ENCODE measurements at regions of chr5 and their contacts with region 1.

Region 1: GRCh38 chr5:134411546-134412266 is at the start of gene CDKN2AIPNL:
- DNase-seq: peak; percentile 95
- ATAC-seq: peak; percentile 100
- H3K4me3 Mint-ChIP-seq: peak within 1 kb of the TSS; percentile 96
- H3K27ac Mint-ChIP-seq: peak within 1 kb of the TSS; percentile 92
- H3K4me1 Mint-ChIP-seq: peaks cover 35% of the 10 kb centered on the region
- H3K27me3 Mint-ChIP-seq: no peaks in the 10 kb centered on the region
- total RNA-seq, gene CDKN2AIPNL: 36.1 to 42.0 TPM

Region 2: DNA sequence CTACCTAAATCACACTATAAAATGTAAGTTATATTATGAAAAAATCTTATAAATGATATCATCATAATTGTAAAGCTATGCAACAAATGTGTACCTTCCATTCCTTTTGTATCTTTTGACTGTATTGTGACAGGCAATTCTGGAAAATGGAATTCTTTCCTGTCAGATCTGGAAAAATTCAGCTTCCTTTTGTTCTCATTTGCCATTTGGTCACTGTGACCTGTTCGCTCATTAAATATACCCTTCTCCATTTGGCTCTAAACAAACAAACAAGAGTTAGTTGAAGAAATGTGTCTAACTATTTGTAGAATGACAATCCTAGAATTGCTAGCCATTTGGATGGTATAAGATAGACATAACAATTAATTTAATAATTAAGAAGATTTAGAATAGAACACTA is 107.4 kb before region 1 on chr5:
- CTCF ChIA-PET with region 1: interaction called, 9 read pairs
- POLR2A ChIA-PET with region 1: no interaction called
- intact Hi-C with region 1: loop called in 1 of 2 experiments (anchors 10 kb)
- DNase-seq: no peak
- ATAC-seq: no peak
- H3K4me3 Mint-ChIP-seq: no peak overlapping the region
- H3K27ac Mint-ChIP-seq: no peak overlapping the region
- H3K4me1 Mint-ChIP-seq: no peaks in the 10 kb centered on the region
- H3K27me3 Mint-ChIP-seq: no peaks in the 10 kb centered on the region

Region 3: DNA sequence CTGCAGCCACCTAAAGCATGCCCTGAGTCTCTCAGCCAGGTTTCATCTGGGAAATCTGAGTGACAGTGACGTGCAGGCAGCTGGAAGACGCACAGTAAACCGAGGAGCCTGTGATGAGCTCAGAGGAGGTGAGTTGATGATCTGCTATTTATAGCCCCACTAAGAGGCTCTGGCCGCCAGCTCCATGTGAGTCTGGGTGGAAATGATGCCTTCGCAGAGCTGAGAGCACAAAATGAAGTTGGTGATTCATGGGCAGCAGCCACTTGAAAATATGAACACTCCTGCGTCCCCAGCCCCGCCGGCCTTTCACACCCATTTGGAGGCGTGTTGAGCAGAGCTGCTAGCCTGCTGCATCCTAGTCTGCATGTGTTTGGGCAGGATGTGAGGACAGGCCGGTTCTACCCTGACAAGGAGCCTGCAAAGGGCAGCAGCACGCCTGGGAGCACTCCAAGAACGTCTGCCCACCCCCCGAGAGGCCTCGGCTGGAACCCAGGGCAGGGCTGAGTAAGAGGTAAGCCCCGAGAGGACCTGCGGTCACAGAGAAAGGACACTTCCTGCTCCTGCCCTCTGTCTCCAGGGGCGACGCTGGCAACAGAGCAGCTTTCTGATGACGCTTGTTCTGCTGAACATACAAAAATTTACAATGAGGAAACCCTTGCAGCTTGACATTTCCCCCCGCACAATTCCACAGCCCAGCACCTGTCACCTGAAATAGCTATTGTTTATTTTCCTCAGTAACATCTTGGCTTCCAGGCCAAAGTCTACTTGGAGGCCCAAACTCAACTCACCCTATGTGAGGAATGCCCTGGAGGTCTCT is 25.0 kb after region 1 on chr5:
- CTCF ChIA-PET with region 1: interaction called, 8 read pairs
- POLR2A ChIA-PET with region 1: no interaction called
- intact Hi-C with region 1: loop called in 1 of 2 experiments (anchors 1 kb)
- DNase-seq: peak; percentile 78
- ATAC-seq: peak; percentile 80
- H3K4me3 Mint-ChIP-seq: no peak overlapping the region
- H3K27ac Mint-ChIP-seq: peak overlapping the region; percentile 32
- H3K4me1 Mint-ChIP-seq: peaks cover 35% of the 10 kb centered on the region
- H3K27me3 Mint-ChIP-seq: no peaks in the 10 kb centered on the region

Region 4: GRCh38 chr5:134465816-134466240 is 54.1 kb after region 1 on chr5:
- CTCF ChIA-PET with region 1: interaction called, 8 read pairs
- POLR2A ChIA-PET with region 1: interaction called, 5 read pairs
- intact Hi-C with region 1: loop called in 1 of 2 experiments (anchors 1 kb)
- DNase-seq: peak; percentile 77
- ATAC-seq: peak; percentile 90
- H3K4me3 Mint-ChIP-seq: peak overlapping the region; percentile 74
- H3K27ac Mint-ChIP-seq: peak overlapping the region; percentile 71
- H3K4me1 Mint-ChIP-seq: peaks cover 14% of the 10 kb centered on the region
- H3K27me3 Mint-ChIP-seq: no peaks in the 10 kb centered on the region

Region 5: GRCh38 chr5:134577796-134578363 is 166.2 kb after region 1 on chr5:
- CTCF ChIA-PET with region 1: interaction called, 6 read pairs
- POLR2A ChIA-PET with region 1: interaction called, 3 read pairs
- intact Hi-C with region 1: loop called in 1 of 2 experiments (anchors 1 kb)
- DNase-seq: peak; percentile 90
- ATAC-seq: peak; percentile 83
- H3K4me3 Mint-ChIP-seq: no peak overlapping the region
- H3K27ac Mint-ChIP-seq: peak overlapping the region; percentile 25
- H3K4me1 Mint-ChIP-seq: peaks cover 9% of the 10 kb centered on the region
- H3K27me3 Mint-ChIP-seq: no peaks in the 10 kb centered on the region

Region 6: DNA sequence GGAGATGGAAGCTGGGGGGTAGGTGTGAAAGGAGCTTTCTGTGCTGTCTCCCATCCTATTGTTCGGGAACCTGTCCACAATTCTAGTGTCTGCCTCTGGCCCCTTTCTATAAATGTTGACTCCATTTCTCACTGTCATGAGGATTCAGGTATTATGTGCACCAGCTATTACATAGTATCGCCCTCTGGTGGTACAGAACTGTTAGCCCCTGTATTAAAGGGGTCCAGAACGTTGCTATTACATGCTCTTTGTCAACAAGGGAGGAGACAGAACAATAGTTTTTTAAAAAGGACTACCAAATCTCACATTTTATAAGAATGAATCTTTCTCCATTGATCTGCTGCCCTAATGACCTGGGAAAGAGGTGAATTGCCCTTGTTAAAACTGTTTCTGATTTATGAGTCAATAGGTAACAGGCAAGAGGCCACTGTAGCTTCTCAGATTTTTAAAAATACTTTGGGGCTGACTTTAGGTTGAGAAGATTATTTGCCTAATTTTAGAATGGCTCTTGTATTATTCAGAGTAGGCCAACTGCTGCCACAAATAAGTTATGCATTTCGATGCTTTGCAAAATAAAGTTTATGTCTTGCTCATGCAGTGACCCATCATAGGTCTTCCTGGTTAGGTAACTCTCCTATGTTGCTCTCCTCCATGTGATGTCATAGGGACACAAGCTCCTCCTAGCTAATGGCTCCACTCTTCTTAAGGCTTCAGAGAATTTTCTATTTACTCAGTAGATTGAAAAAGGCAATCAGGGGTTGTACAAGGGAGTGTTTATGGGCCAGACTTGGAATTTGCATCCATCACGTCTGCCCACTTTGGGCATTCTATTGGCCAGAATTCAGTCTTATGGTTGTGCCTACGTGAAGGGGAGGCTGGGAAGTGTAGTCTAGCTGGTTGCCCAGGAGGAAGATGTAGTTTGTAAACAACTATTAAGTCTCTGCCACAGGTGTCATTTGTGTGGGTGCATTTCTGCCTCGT is 1014.7 kb after region 1 on chr5:
- CTCF ChIA-PET with region 1: no interaction called
- POLR2A ChIA-PET with region 1: no interaction called
- intact Hi-C with region 1: no loop called
- DNase-seq: peak; percentile 31
- ATAC-seq: peak; percentile 86
- H3K4me3 Mint-ChIP-seq: no peak overlapping the region
- H3K27ac Mint-ChIP-seq: no peak overlapping the region
- H3K4me1 Mint-ChIP-seq: peaks cover 4% of the 10 kb centered on the region
- H3K27me3 Mint-ChIP-seq: peaks cover 3% of the 10 kb centered on the region

Measured in activated CD4-positive, alpha-beta T cell treated with anti-CD3 and anti-CD28 coated beads for 36 hours (primary cell).